B cell (primary cell): ENCODE measurements at regions of chr4 and their contacts with region 1.

Region 1: GRCh38 chr4:163638909-163639308 is 144.4 kb downstream of the TMA16 start:
- DNase-seq: no peak
- ATAC-seq: no peak
- H3K4me3 ChIP-seq: no peak overlapping the region
- H3K4me3 Mint-ChIP-seq: no peak overlapping the region
- H3K27ac ChIP-seq: no peak overlapping the region
- H3K27ac Mint-ChIP-seq: no peak overlapping the region
- H3K4me1 ChIP-seq: no peaks in the 10 kb centered on the region
- H3K4me1 Mint-ChIP-seq: peaks cover 8% of the 10 kb centered on the region
- H3K27me3 ChIP-seq: no peaks in the 10 kb centered on the region
- H3K27me3 Mint-ChIP-seq: no peaks in the 10 kb centered on the region
- CTCF ChIP-seq: no peak

Region 2: DNA sequence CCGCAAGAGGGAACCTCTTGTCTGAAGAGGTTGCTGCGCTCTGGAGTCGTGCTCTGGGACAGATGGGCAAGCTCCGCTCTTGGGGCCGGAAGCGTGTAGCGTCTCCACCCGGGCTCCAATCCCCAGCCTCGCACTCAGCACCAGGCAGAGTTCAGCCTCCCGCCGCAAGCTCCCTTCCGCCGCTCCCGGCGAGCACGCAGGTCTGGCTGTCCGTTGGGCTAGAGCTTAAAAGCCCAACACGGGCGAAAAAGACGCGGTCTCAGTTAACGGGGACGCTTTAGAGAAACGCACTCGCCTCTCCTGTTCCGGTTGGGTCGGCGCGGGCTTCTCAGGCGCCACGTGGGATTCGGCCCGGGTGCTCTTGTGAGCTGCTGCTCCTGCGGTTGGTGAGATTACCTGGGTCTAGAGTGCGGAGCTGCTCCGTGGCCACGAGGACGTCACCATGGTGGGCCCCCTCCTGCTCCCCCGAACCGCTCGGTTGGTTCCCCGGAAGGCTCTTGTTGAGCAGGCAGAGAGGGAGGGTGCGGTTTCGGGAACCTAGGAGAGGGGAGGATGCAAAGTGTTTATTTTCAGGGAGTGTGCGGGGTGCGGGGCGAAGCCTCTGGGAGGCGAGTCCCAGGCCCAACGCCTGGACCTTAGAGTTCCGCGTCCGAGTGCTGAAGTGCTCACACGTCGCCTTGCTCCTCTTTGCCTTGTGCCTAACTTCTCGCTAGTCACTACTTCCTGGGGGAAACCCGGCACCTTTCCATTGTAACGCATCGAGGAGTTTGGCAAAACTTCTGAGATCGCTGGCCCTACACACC is 144.3 kb before region 1 on chr4 and contains the start of gene TMA16:
- CTCF ChIA-PET with region 1: no interaction called
- POLR2A ChIA-PET with region 1: no interaction called
- intact Hi-C with region 1: no loop called
- DNase-seq: peak; percentile 90
- ATAC-seq: peak; percentile 67
- H3K4me3 ChIP-seq: peak within 1 kb of the TSS; percentile 68 to 99 (median 96)
- H3K4me3 Mint-ChIP-seq: peak within 1 kb of the TSS; percentile 99
- H3K27ac ChIP-seq: peak within 1 kb of the TSS; percentile 80 to 81
- H3K27ac Mint-ChIP-seq: peak within 1 kb of the TSS; percentile 100
- H3K4me1 ChIP-seq: peaks cover 21 to 28% of the 10 kb centered on the region in 2 donors
- H3K4me1 Mint-ChIP-seq: peaks cover 42% of the 10 kb centered on the region
- H3K27me3 ChIP-seq: no peaks in the 10 kb centered on the region
- H3K27me3 Mint-ChIP-seq: no peaks in the 10 kb centered on the region
- CTCF ChIP-seq: no peak
- total RNA-seq, gene TMA16: 40.5 and 49.0 TPM in 2 replicates

Region 3: DNA sequence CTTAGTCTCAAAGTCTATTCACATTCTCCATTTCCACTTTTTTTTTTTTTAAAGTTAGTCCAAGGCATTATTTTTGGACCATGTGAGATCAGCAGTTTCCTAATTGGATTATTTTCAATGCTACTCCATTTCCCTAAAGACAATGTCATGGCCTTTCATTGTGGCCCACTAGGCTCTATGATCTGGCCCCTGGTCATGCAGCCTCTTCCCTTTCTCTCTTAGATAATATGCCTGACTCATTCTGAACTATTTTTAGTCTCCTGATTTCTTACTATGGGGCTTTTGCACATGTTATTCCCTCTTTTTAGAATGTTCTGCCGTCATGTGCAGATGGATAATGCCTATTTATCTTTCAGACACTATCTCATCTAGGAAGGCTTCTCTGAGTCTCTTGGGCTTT is 12.9 kb after region 1 on chr4:
- CTCF ChIA-PET with region 1: interaction called, 3 read pairs
- POLR2A ChIA-PET with region 1: no interaction called
- intact Hi-C with region 1: loop called (anchors 2 kb)
- DNase-seq: no peak
- ATAC-seq: no peak
- H3K4me3 ChIP-seq: no peak overlapping the region
- H3K4me3 Mint-ChIP-seq: no peak overlapping the region
- H3K27ac ChIP-seq: no peak overlapping the region
- H3K27ac Mint-ChIP-seq: no peak overlapping the region
- H3K4me1 ChIP-seq: no peaks in the 10 kb centered on the region
- H3K4me1 Mint-ChIP-seq: peaks cover 9% of the 10 kb centered on the region
- H3K27me3 ChIP-seq: no peaks in the 10 kb centered on the region
- H3K27me3 Mint-ChIP-seq: no peaks in the 10 kb centered on the region
- CTCF ChIP-seq: no peak